ENCODE measurements at regions of chr16 and their contacts with region 1.

Region 1: DNA sequence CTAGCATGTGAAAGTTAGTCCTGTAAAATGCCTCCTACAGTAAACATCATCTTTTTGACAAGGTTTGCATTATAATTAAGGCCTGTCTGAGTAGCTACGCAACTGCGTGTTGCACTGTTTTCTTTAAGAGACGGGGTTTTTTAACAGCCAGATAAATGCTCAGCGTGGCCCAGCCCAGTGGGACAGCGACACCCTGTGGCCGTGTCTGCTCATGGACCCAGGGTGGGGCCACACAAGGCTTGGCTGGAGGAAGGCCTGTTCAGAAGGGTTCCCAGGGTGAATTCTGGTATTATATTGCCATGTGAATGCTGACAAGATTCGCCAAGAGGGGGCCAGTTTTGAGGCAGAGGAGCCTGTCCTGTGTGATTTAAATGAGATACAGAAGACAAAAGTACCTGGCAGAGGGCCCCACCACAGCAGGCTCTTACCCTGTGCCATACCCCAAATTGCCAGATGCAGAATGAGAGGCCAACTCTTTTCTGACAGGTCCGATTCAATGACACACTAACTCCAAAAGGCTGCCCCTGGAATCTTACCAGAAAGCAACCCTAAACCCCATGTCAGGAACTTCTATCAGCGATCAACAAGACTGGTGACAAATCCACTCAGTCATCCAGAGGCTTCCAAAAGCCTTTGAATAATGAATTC is 65.9 kb upstream of the IRX6 start:
- DNase-seq: peak; percentile 20
- H3K4me3 ChIP-seq: no peak overlapping the region
- CTCF ChIP-seq: peak; percentile 76

Region 2: GRCh38 chr16:54929090-54930004 is 328.7 kb before region 1 on chr16:
- in situ Hi-C with region 1: loop called (anchors 10 kb)
- DNase-seq: peak; percentile 98
- H3K4me3 ChIP-seq: peak overlapping the region; percentile 78
- CTCF ChIP-seq: no peak

Measured in astrocyte of the cerebellum (primary cell).